ENCODE measurements at regions of chr17 and their contacts with region 1.

Region 1: GRCh38 chr17:42773290-42774035 is at the start of gene VPS25:
- DNase-seq: peak; percentile 82
- ATAC-seq: peak; percentile 97
- H3K4me3 Mint-ChIP-seq: peak within 1 kb of the TSS; percentile 99
- H3K27ac Mint-ChIP-seq: peak within 1 kb of the TSS; percentile 99
- H3K4me1 Mint-ChIP-seq: peaks cover 34% of the 10 kb centered on the region
- H3K27me3 Mint-ChIP-seq: peaks cover 2% of the 10 kb centered on the region
- total RNA-seq, gene VPS25: 67.8 to 70.5 TPM

Region 2: GRCh38 chr17:42131981-42132432 is 641.5 kb before region 1 on chr17:
- CTCF ChIA-PET with region 1: no interaction called
- POLR2A ChIA-PET with region 1: no interaction called
- DNase-seq: no peak
- ATAC-seq: no peak
- H3K4me3 Mint-ChIP-seq: no peak overlapping the region
- H3K27ac Mint-ChIP-seq: peak overlapping the region; percentile 59
- H3K4me1 Mint-ChIP-seq: peaks cover 54% of the 10 kb centered on the region
- H3K27me3 Mint-ChIP-seq: no peaks in the 10 kb centered on the region

Region 3: DNA sequence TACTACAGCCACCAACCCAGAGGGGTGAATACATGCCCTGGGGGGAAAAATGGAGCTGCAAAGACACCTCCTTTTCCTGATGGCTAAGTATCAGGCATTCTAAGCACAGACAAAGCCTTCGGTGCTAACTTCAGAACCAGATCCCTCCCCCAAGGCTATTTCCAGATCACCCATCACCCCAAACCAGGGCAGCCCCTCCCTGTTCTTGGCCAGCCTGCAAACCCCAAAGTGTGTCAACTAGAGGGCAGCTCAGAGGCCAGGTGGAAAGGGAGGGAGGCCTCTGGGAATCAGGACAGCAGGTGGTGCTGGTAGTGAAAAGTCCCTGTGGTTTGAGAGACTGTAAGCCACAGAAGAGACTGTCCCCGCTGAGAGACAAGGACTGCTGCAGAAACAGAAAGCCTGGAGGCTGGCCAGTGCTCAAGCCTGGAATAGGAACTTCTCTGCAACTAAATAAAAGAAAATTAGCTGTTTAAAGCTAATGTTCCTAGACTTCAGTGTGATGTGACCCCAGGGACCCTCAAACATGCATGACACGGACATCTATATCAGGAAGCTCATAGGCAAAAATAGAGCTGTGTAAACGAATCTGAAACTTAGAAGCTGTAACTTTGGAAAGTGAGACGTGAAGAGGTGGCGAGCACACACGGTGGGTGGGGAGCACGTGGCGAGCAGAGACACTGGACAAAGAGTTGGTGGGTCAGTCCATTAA is 154.9 kb before region 1 on chr17:
- CTCF ChIA-PET with region 1: no interaction called
- POLR2A ChIA-PET with region 1: no interaction called
- DNase-seq: peak; percentile 26
- ATAC-seq: peak; percentile 56
- H3K4me3 Mint-ChIP-seq: no peak overlapping the region
- H3K27ac Mint-ChIP-seq: peak overlapping the region; percentile 5
- H3K4me1 Mint-ChIP-seq: peaks cover 15% of the 10 kb centered on the region
- H3K27me3 Mint-ChIP-seq: peaks cover 2% of the 10 kb centered on the region

Region 4: GRCh38 chr17:42798383-42799380 is 25.2 kb after region 1 on chr17 and contains the starts of genes CNTD1 and COA3:
- CTCF ChIA-PET with region 1: no interaction called
- POLR2A ChIA-PET with region 1: interaction called, 14 read pairs
- DNase-seq: peak; percentile 88
- ATAC-seq: peak; percentile 99
- H3K4me3 Mint-ChIP-seq: peak within 1 kb of the TSS; percentile 94
- H3K27ac Mint-ChIP-seq: peak within 1 kb of the TSS; percentile 77
- H3K4me1 Mint-ChIP-seq: peaks cover 18% of the 10 kb centered on the region
- H3K27me3 Mint-ChIP-seq: peaks cover 5% of the 10 kb centered on the region
- total RNA-seq, gene CNTD1: not detected
- total RNA-seq, gene COA3: 41.4 to 41.5 TPM

Region 5: GRCh38 chr17:42843358-42843934 is 70.0 kb after region 1 on chr17:
- CTCF ChIA-PET with region 1: no interaction called
- POLR2A ChIA-PET with region 1: no interaction called
- DNase-seq: no peak
- ATAC-seq: no peak
- H3K4me3 Mint-ChIP-seq: no peak overlapping the region
- H3K27ac Mint-ChIP-seq: no peak overlapping the region
- H3K4me1 Mint-ChIP-seq: peaks cover 11% of the 10 kb centered on the region
- H3K27me3 Mint-ChIP-seq: no peaks in the 10 kb centered on the region